ENCODE measurements at regions of chr7 and their contacts with region 1.

Region 1: DNA sequence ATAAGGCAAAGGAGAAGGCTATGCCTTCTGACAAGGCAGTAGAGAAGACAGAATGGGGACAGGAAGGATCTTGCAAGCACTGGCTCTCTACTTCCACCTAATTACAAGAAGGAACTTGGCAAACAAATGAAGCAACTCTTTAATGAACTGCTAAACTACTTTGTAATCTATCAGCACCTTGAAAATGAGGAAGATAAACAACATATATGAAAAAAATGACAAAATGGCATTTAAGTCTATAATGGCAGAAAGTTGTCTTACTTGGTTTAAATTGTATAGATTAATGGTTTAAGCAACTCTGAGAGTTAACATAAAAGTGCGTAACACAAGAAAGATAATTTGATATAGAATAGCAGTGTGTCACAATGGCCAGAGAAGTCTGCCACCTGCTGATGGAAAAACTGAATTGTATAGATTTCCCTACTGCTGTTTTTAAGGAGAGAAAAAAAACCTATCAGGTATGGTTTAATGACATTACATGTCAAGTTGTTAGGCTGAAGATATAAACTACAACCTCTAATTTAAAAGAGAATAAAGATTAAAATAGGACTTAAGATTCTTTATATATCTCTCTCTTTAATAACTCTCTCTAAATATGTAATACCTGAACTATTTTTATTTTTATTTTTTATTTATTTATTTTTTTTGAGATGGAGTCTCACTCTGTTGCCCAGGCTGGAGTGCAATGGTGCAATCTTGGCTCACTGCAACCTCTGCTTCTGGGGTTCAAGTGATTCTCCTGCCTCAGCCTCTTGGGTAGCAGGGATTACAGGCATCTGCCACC is 11.8 kb downstream of the NT5C3A start:
- DNase-seq: peak; percentile 71 to 82 (median 75)
- H3K4me3 ChIP-seq: peak overlapping the region in 6 of 7 experiments; percentile 19 to 71 (median 55)
- H3K27ac ChIP-seq: peak overlapping the region; percentile 29 to 91
- H3K4me1 ChIP-seq: peaks cover 39 to 74% (median 55%) of the 10 kb centered on the region in 4 experiments
- H3K27me3 ChIP-seq: no peaks in the 10 kb centered on the region

Region 2: GRCh38 chr7:33062782-33063443 is 12.2 kb after region 1 on chr7:
- CTCF ChIA-PET with region 1: interaction called, 26 read pairs
- POLR2A ChIA-PET with region 1: interaction called, 7 read pairs
- DNase-seq: peak; percentile 95 to 98 (median 98)
- H3K4me3 ChIP-seq: peak overlapping the region; percentile 92 to 99 (median 97)
- H3K27ac ChIP-seq: peak overlapping the region; percentile 77 to 93
- H3K4me1 ChIP-seq: peaks cover 17 to 45% (median 29%) of the 10 kb centered on the region in 4 experiments
- H3K27me3 ChIP-seq: no peaks in the 10 kb centered on the region

Region 3: DNA sequence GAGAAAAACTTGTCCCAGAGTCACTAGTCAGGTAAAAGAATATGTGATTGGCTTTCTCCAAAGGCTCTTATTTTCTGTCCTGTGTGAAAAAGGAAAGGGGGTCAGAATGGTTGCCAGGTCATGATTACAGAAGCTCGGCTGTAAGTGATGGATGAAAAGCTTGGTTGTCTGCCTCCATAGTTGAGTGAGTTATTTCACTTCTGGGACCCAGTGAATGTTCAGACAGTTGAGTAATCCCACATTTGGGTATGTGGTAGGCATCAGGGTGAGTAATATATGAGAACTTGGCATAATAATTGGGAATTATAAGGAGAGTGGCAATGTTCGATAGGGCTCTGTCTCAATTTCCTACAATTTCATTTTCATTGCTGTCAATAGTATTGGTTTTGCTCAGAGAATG is 151.1 kb after region 1 on chr7:
- CTCF ChIA-PET with region 1: no interaction called
- POLR2A ChIA-PET with region 1: no interaction called
- DNase-seq: no peak
- H3K4me3 ChIP-seq: no peak overlapping the region
- H3K27ac ChIP-seq: no peak overlapping the region
- H3K4me1 ChIP-seq: no peaks in the 10 kb centered on the region
- H3K27me3 ChIP-seq: no peaks in the 10 kb centered on the region

Measured in common myeloid progenitor, CD34-positive (primary cell).